ENCODE measurements at regions of chr15 and their contacts with region 1.

Region 1: DNA sequence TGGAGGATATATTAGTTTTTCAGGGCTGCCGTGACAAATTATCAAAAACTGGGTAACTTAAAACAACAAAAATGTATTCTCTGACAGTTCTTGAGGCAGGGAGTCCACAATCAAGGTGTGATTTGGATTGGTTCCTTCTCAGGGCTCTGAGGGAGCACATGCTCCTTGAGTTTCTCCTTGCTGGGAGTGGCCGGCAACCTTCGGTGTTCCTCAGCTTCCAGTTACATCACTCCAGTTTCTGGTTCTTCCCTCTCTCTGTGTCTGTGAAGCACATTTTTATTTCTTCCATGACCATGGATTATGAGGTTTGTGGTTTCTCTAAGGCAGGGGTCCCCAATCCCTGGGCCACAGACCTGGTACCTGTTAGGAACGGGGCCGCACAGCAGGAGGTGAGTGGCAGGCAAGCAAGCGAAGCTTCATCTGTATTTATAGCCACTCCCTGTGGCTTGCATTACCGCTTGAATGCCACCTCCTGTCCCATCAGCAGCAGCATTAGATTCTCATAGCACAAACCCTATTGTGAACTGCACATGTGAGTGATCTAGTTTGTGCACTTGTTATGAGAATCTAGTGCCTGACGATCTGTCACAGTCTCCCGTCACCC is 24.3 kb downstream of the LRRC28 start:
- DNase-seq: no peak
- H3K4me3 ChIP-seq: no peak overlapping the region
- H3K27ac ChIP-seq: no peak overlapping the region
- H3K27me3 ChIP-seq: no peaks in the 10 kb centered on the region
- CTCF ChIP-seq: no peak

Region 2: GRCh38 chr15:99253381-99254090 is 22.1 kb before region 1 on chr15:
- CTCF ChIA-PET with region 1: interaction called, 24 read pairs
- POLR2A ChIA-PET with region 1: no interaction called
- DNase-seq: no peak
- H3K4me3 ChIP-seq: no peak overlapping the region
- H3K27ac ChIP-seq: no peak overlapping the region
- H3K27me3 ChIP-seq: no peaks in the 10 kb centered on the region
- CTCF ChIP-seq: 0 out of 2 replicates have a peak, but pooled peaks have one; percentile 11

Region 3: DNA sequence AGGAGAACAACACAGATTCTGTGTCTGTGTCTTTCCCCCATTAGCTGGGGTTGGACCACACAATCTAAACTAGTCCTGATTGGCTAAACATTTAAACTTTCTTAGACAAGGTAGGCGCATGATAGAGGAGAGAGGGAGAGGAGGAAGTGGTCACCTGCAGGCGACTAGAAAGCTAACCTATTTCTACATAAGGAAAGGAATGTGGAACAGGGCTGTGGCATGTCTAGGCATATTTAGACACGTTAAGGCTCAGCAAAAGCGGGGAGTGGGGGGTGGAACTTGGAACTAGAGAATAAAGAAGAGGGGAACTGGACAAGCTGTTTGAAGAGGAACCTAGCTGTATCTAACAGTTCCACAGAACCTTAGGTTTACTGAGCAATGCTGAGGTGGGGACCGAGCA is 11.5 kb before region 1 on chr15:
- CTCF ChIA-PET with region 1: interaction called, 26 read pairs
- POLR2A ChIA-PET with region 1: no interaction called
- DNase-seq: no peak
- H3K4me3 ChIP-seq: no peak overlapping the region
- H3K27ac ChIP-seq: no peak overlapping the region
- H3K27me3 ChIP-seq: no peaks in the 10 kb centered on the region
- CTCF ChIP-seq: no peak

Region 4: DNA sequence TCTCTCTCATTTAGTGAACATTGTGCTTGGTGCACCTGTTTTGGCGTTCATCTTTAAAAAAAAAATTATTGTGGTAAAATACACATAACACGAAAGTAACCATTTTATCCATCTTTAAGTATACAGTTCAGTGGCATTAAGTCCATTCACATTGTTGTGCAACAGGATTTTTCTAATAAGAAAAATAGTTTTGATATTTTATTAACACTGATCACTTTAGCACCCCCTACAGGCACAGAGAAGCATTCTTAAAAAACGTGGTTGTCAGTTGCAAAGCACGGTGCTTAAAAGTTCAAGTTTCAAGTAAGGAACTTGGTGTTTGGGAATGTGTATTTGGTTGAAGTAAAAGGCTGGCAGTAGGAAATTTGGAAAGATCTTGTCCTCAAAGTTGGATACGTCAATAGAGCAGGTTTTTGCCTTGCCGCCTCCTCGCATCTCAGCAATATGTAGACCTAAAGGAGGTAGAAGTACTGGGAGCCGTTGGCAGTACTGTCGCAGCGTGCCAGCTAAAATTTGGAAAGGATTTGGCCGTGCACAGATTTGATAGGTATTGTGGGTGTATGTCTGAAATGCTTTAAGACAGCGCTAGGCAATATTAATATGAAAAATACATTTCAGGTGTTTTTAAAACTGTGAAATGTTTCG is 86.0 kb after region 1 on chr15:
- CTCF ChIA-PET with region 1: interaction called, 12 read pairs
- POLR2A ChIA-PET with region 1: no interaction called
- DNase-seq: no peak
- H3K4me3 ChIP-seq: no peak overlapping the region
- H3K27ac ChIP-seq: no peak overlapping the region
- H3K27me3 ChIP-seq: no peaks in the 10 kb centered on the region
- CTCF ChIP-seq: peak; percentile 56

Region 5: GRCh38 chr15:99733268-99734039 is 457.8 kb after region 1 on chr15 and contains the start of gene LYSMD4:
- CTCF ChIA-PET with region 1: interaction called, 65 read pairs
- POLR2A ChIA-PET with region 1: no interaction called
- DNase-seq: peak; percentile 66
- H3K4me3 ChIP-seq: peak within 1 kb of the TSS; percentile 75
- H3K27ac ChIP-seq: peak within 1 kb of the TSS; percentile 57
- H3K27me3 ChIP-seq: peaks cover 3% of the 10 kb centered on the region
- CTCF ChIP-seq: no peak
- polyA plus RNA-seq, gene LYSMD4: 3.2 and 3.3 TPM in 2 replicates

Region 6: DNA sequence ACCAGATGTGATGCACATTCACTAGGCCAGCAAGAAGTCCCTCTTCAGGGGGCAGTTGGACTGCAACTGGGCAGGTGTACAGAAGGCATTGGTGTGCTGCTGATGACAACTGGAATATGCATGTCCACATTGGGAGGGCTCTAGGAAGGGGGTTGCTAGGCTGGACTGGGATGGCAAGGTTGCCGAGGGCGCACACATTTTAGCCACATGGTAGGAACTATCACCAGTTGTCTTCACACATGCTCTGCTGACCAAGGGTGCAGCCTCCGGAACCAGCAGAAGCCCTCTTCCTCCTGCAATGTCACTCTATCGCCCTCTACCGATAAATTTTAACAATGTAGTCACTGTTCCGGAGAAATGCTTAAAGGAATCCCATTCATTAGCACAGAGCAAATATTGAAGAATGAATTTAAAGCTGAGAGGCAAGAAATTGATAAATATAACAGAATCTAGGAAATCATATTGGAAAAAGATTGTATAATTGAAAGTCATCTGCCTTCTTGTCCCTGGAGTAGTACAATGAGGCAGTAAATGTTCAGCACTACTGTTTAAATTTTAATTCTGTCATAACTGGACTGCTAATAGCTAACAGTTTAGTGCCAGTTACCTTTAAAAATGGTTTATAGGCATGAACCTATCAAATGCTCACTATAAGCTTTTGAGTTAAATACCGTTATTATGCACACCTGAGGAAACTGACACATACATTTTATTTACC is 480.2 kb after region 1 on chr15:
- CTCF ChIA-PET with region 1: interaction called, 176 read pairs
- POLR2A ChIA-PET with region 1: no interaction called
- DNase-seq: peak; percentile 18
- H3K4me3 ChIP-seq: no peak overlapping the region
- H3K27ac ChIP-seq: no peak overlapping the region
- H3K27me3 ChIP-seq: peaks cover 4% of the 10 kb centered on the region
- CTCF ChIP-seq: peak; percentile 89

Region 7: DNA sequence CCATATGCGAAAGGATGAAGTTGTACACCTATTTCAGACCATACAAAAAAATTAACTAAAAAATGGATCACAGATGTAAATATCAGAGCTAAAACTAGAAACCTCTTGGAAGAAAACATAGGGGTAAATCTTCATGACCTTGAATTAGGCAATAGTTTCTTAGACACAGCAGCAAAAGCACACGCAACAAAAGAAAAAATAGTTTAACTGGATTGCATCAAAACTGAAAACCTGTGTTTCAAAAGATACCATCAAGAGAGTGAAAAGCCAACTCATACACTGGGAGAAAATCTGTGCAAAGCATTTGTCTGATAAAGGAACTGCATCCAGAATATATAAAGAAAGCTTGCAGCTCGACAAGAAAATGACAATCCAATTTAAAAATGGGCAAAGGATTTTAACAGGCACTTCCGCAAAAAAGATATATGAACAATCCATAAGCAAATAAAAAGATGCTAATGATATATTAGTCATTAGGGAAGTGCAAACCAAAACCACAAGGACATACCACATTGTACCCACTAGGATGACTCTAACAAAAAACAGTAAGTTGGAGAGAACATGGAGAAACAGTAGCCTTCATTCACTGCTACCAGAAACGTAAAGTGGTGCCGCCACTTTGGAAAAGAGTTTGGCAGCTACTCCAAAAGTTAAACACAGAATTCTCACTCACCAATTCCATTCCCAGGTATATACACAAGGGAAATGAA is 803.0 kb after region 1 on chr15:
- CTCF ChIA-PET with region 1: no interaction called
- POLR2A ChIA-PET with region 1: no interaction called
- DNase-seq: no peak
- H3K4me3 ChIP-seq: no peak overlapping the region
- H3K27ac ChIP-seq: no peak overlapping the region
- H3K27me3 ChIP-seq: no peaks in the 10 kb centered on the region
- CTCF ChIP-seq: no peak

Region 8: DNA sequence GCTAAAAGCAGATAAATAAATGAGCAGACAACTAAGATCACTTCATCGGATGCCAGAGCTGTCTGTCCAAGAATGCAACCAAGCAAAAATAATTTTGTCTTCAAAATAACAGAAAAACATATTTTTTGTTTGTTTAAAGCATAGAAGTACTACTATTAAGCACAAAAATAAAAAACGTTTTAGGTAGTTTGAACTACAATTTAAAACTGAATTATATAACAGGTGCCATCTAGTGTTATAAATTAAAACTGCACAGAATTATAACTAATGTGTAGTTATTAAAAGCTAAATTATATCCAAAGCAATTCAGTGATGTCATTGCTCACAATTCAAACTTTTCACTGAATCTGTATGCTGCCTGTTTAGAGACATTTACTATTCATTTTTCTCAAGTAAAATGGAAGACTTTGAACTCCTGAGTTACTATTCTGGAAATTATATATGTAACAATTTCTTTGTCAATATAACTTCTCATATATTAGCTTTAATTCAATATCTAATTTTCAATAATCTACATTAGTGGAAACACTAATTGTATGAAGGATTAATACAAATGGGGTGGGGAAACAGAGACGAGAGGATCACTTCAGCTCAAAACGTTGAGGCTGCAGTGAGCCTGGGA is 1296.8 kb after region 1 on chr15:
- CTCF ChIA-PET with region 1: interaction called, 13 read pairs
- POLR2A ChIA-PET with region 1: no interaction called
- DNase-seq: no peak
- H3K4me3 ChIP-seq: no peak overlapping the region
- H3K27ac ChIP-seq: no peak overlapping the region
- H3K27me3 ChIP-seq: no peaks in the 10 kb centered on the region
- CTCF ChIP-seq: peak; percentile 38

Measured in AG04450 (cell line).